GM13976 (cell line): ENCODE measurements at regions of chr11 and their contacts with region 1.

Region 1: GRCh38 chr11:122754553-122755322 is 83.6 kb upstream of the CRTAM start:
- DNase-seq: peak; percentile 58
- CTCF ChIP-seq: peak; percentile 51

Region 2: GRCh38 chr11:122633219-122633829 is 121.4 kb before region 1 on chr11:
- in situ Hi-C with region 1: loop called (anchors 10 kb)
- DNase-seq: peak; percentile 68
- CTCF ChIP-seq: peak; percentile 45